AG04450 (cell line): ENCODE measurements at regions of chr6 and their contacts with region 1.

Region 1: DNA sequence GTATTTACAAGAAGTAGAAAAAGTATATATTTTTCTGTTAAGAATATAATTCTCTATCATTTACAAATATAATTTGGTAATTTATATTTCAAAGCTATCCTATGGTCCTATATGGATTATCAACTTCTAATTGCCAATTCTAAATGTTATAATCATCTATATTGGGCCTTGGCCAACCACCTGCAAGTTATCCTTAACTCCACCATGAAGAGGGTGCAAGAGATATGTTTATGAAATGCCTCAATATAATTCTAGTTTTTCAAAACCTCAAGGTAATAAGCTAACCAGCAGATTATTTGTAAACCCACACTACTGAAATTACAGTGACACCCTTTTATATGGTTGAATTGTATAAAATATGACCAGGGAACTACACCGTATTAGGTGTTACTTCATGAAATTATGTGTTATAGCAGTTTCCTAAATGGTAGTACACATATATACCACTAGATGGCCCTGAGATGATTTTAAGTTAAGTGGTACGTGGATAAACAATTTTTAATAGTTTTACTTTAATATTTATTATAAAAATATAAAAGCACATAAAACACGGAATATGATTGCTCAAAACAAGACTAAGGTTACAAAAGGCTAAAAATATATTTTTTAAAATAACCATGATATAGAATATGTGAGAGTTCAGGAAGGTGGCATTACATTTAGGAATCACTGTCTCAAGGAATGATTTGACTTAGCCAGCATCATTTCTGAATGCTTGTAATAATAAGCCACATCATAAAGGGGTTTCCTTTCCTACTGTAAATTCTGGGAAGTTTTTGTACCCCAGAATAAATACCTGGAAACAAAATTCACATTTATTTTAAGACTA is 9.8 kb upstream of the PNISR start:
- DNase-seq: no peak
- H3K4me3 ChIP-seq: no peak overlapping the region
- H3K27ac ChIP-seq: no peak overlapping the region
- H3K27me3 ChIP-seq: no peaks in the 10 kb centered on the region
- CTCF ChIP-seq: peak; percentile 66

Region 2: GRCh38 chr6:99016355-99016754 is 418.6 kb before region 1 on chr6:
- CTCF ChIA-PET with region 1: no interaction called
- POLR2A ChIA-PET with region 1: no interaction called
- DNase-seq: no peak
- H3K4me3 ChIP-seq: no peak overlapping the region
- H3K27ac ChIP-seq: no peak overlapping the region
- H3K27me3 ChIP-seq: no peaks in the 10 kb centered on the region
- CTCF ChIP-seq: no peak

Region 3: DNA sequence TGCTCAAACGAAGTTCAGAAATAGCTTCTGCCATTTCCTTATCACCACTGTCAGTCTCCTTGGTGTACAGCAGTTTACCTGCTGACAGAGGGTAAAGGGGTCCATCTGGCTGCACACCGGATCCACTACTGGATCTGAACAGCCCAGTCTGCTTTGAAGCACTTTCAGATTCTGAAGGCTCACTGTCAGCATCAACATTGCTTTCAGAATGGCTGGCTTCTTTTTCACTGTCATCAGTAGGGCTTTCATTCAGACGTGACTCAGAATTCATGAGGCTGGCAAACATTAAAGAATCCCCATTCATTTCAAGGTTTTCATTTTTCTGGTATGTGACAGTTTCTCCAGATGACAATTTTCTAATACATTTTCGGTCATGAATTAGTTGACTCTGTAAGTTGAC is 11.2 kb after region 1 on chr6:
- CTCF ChIA-PET with region 1: interaction called, 13 read pairs
- POLR2A ChIA-PET with region 1: no interaction called
- DNase-seq: no peak
- H3K4me3 ChIP-seq: no peak overlapping the region
- H3K27ac ChIP-seq: no peak overlapping the region
- H3K27me3 ChIP-seq: no peaks in the 10 kb centered on the region
- CTCF ChIP-seq: no peak

Region 4: DNA sequence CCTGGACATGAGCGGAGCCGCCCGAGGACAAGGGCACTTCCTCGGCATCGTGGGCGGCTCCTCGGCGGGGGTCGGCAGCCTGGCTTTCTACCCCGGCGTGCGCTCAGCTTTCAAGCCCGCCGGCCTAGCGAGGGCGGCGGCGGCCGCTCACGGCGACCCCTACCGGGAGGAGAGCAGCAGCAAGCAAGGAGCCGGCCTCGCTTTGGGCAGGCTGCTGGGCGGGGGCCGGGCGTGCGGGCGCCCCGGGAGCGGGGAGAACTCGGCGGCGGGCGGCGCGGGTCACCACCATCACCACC is 178.4 kb after region 1 on chr6:
- CTCF ChIA-PET with region 1: no interaction called
- POLR2A ChIA-PET with region 1: no interaction called
- DNase-seq: no peak
- H3K4me3 ChIP-seq: peak overlapping the region; percentile 31; the same call in 1 of the 2 replicates
- H3K27ac ChIP-seq: no peak overlapping the region
- H3K27me3 ChIP-seq: peaks cover 93% of the 10 kb centered on the region
- CTCF ChIP-seq: peak; percentile 51; the same call in 1 of the 2 replicates